ENCODE measurements at regions of chr22 and their contacts with region 1.

Region 1: DNA sequence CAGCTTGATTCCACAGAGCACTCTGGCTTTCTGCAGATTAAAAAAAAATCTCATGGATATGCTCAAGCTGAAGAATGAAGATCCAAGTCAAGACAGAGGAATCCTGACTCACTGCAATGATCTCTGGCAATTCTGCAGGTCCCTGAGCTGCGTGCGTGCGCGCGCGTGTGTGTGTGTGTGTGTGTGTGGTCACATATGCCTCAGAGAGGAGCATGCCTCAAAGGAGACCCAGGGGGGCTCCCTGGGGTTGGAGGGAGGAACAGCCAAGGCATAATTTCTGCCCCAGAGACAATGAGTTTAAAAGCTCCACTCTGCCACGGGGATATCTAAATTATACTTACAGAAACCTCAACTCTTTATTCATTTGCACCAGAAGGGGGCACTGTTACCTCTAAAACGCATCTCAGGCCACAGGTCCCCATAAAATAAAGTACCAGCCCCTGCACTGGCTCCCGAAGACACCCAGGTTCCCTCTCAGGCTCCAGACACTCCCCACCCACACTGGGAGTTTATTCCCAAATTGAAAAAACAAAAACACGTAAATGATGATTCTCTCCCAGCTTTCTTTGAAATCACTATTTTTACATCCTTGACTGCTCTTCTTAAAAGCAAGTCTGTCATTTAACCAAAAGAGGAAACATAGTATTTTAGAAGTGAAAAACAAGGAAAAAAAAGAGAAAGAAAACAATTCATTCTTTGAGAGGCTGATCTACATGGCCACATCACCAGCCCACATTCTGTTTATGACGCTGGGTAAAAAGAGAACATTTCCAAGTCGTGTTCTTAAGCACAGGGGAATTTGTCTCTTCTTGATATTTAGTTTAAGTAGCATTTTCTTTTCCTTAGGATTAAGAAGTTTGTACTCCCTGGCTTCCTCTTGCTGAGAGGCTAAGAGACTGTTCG is 401.0 kb downstream of the LARGE1 start:
- DNase-seq: peak; percentile 74
- CTCF ChIP-seq: peak; percentile 53

Region 2: GRCh38 chr22:33492210-33492651 is 27.1 kb before region 1 on chr22:
- CTCF ChIA-PET with region 1: interaction called, 12 read pairs
- POLR2A ChIA-PET with region 1: no interaction called
- DNase-seq: peak; percentile 43
- CTCF ChIP-seq: no peak

Region 3: DNA sequence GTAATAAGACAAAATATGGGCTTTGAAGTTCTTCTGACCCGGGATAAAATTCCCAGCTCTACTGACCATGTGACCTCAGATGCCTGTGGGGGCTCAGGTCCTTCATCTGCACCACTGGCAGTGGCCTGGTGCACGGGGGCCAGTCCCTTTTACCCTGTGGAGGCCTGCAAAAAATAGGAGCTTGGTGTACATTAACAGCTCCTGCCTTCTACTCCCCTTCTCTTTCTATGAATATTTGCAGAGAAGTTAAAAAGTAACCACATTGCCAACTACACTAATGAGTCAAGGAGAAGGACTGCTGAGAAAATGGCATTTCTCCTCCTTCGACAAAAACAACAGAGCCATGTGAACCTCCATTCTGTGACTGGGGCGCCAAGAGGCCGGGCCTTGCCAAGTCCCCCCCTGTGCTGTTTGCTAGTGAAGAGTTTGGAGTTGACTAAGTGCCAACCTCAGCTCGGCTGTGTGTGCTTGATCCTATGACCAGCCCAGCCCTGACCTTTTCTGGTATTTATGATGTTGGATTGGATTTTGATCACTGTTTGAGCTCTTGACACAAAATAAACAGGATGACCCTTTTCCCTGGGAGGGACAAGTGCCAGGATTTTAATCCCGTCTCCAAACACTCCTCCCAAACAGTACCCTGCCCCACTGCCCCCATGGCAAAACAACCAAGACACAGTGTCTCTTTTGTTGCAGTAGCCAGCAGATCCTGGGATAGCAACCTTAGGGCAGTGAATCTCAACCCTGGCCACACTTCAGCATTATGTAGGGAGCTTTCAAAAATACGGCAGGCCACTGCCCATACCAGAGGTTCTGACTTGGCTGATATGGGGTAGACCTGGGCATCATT is 20.8 kb after region 1 on chr22:
- CTCF ChIA-PET with region 1: interaction called, 82 read pairs
- POLR2A ChIA-PET with region 1: no interaction called
- DNase-seq: no peak
- CTCF ChIP-seq: no peak

Region 4: DNA sequence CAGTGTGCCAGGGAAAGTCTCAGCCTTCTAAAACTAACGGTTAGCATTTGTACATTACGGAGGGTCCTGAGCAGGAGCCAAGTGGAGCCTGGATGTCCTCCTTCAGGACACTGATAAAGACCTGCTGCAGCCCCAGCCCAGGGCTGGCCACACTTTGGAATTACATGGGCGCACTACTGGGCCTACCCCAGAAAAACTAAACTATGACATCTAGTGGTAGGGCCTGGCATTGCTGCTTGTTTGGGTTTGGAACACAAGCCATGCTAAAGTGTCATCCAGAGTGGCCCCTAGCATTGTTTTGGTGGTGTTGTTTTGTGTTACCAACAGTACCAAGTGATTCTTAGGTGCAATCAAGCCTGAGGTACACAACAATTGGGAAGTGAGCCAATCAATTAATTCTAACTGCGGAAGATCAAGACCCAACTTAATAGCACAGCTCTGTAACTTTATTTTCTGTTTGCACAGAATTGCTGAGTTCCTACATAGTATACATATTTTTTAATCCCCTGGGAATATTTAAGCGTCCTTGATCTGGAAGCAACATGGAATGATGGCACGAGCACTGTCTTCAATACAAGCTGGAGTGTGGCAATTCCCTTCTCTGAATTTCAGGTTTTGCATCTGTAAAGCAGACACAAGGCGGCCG is 60.2 kb after region 1 on chr22:
- CTCF ChIA-PET with region 1: interaction called, 42 read pairs
- POLR2A ChIA-PET with region 1: no interaction called
- DNase-seq: peak; percentile 65
- CTCF ChIP-seq: peak; percentile 86

Region 5: GRCh38 chr22:33625959-33626358 is 106.6 kb after region 1 on chr22:
- CTCF ChIA-PET with region 1: no interaction called
- POLR2A ChIA-PET with region 1: no interaction called
- DNase-seq: no peak
- CTCF ChIP-seq: no peak

Region 6: DNA sequence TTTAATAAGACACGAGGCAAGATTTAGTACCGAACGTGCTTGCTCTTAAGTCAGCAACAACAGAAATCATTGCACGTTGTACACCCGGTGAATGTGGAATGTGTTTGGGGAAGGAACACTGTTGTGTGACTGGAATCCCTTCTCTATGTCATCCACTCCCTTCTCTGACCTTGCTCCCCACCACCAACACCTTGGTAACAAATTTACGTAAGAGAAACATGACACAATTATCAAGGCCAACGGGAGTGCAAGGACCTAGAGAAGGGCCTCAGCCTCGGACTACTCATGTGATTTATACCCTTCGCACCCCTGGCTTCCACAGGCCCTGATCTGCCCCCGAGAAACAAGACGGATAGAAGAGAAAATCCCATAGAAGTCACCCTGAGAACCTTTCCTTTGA is 164.8 kb after region 1 on chr22:
- CTCF ChIA-PET with region 1: no interaction called
- POLR2A ChIA-PET with region 1: no interaction called
- DNase-seq: no peak
- CTCF ChIP-seq: no peak

Region 7: GRCh38 chr22:33737662-33738061 is 218.3 kb after region 1 on chr22:
- CTCF ChIA-PET with region 1: no interaction called
- POLR2A ChIA-PET with region 1: no interaction called
- DNase-seq: no peak
- CTCF ChIP-seq: no peak

Region 8: GRCh38 chr22:33920927-33921524 is 401.7 kb after region 1 on chr22:
- CTCF ChIA-PET with region 1: interaction called, 38 read pairs
- POLR2A ChIA-PET with region 1: no interaction called
- DNase-seq: peak; percentile 90
- CTCF ChIP-seq: no peak

Measured in GM10248 (cell line).